B cell (primary cell): ENCODE measurements at regions of chr1 and their contacts with region 1.

Region 1: GRCh38 chr1:161225534-161226319 is at the start of gene TOMM40L:
- DNase-seq: peak; percentile 96
- ATAC-seq: peak; percentile 90
- H3K4me3 ChIP-seq: peak within 1 kb of the TSS; percentile 32 to 93 (median 79)
- H3K4me3 Mint-ChIP-seq: peak within 1 kb of the TSS; percentile 99
- H3K27ac ChIP-seq: peak within 1 kb of the TSS in 1 of 2 donors; percentile 35
- H3K27ac Mint-ChIP-seq: peak within 1 kb of the TSS; percentile 90
- H3K4me1 ChIP-seq: peaks cover 22 to 29% of the 10 kb centered on the region in 2 donors
- H3K4me1 Mint-ChIP-seq: peaks cover 31% of the 10 kb centered on the region
- H3K27me3 ChIP-seq: peaks cover 0 to 32% (median 24%) of the 10 kb centered on the region in 4 experiments
- H3K27me3 Mint-ChIP-seq: peaks cover 27% of the 10 kb centered on the region
- CTCF ChIP-seq: peak; percentile 56
- total RNA-seq, gene TOMM40L: 9.2 and 9.4 TPM in 2 replicates

Region 2: DNA sequence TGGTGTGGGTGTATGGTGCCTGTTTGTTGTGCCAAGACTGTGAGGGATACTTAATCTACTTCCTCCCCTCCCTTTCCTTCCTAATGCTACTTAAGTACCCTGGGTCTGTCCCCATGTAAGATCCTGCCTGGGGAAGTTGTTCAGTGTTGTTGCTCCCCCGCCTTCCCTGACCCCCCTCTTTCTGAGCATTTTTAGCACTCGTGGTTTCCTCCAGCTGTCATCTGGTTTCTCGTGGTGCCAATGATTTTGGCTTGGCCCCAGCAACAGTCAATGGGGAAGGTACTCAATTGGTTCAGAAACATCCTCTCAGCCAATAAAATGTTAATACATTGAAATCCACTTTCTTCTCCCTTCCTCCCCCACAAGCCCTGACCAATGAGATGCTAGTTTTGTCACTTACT is 40.4 kb before region 1 on chr1:
- CTCF ChIA-PET with region 1: interaction called, 16 read pairs
- POLR2A ChIA-PET with region 1: interaction called, 5 read pairs
- intact Hi-C with region 1: loop called (anchors 5 kb)
- DNase-seq: peak; percentile 91
- ATAC-seq: peak; percentile 76
- H3K4me3 ChIP-seq: peak overlapping the region in 4 of 5 experiments; percentile 31 to 63 (median 36)
- H3K4me3 Mint-ChIP-seq: peak overlapping the region; percentile 71
- H3K27ac ChIP-seq: peak overlapping the region; percentile 86 to 94
- H3K27ac Mint-ChIP-seq: peak overlapping the region; percentile 93
- H3K4me1 ChIP-seq: peaks cover 73 to 93% of the 10 kb centered on the region in 2 donors
- H3K4me1 Mint-ChIP-seq: peaks cover 78% of the 10 kb centered on the region
- H3K27me3 ChIP-seq: no peaks in the 10 kb centered on the region
- H3K27me3 Mint-ChIP-seq: no peaks in the 10 kb centered on the region
- CTCF ChIP-seq: no peak

Region 3: GRCh38 chr1:161201828-161202725 is 23.6 kb before region 1 on chr1 and contains the start of gene NDUFS2:
- CTCF ChIA-PET with region 1: interaction called, 23 read pairs
- POLR2A ChIA-PET with region 1: interaction called, 21 read pairs
- intact Hi-C with region 1: loop called (anchors 1 kb)
- DNase-seq: peak; percentile 97
- ATAC-seq: peak; percentile 98
- H3K4me3 ChIP-seq: peak within 1 kb of the TSS; percentile 77 to 99 (median 88)
- H3K4me3 Mint-ChIP-seq: peak within 1 kb of the TSS; percentile 96
- H3K27ac ChIP-seq: peak within 1 kb of the TSS; percentile 81 to 88
- H3K27ac Mint-ChIP-seq: peak within 1 kb of the TSS; percentile 97
- H3K4me1 ChIP-seq: peaks cover 16 to 26% of the 10 kb centered on the region in 2 donors
- H3K4me1 Mint-ChIP-seq: peaks cover 36% of the 10 kb centered on the region
- H3K27me3 ChIP-seq: no peaks in the 10 kb centered on the region
- H3K27me3 Mint-ChIP-seq: no peaks in the 10 kb centered on the region
- CTCF ChIP-seq: no peak
- total RNA-seq, gene NDUFS2: 80.2 and 82.3 TPM in 2 replicates

Region 4: GRCh38 chr1:161292631-161293030 is 66.9 kb after region 1 on chr1:
- CTCF ChIA-PET with region 1: interaction called, 34 read pairs
- POLR2A ChIA-PET with region 1: no interaction called
- intact Hi-C with region 1: loop called (anchors 5 kb)
- DNase-seq: no peak
- ATAC-seq: no peak
- H3K4me3 ChIP-seq: no peak overlapping the region
- H3K4me3 Mint-ChIP-seq: no peak overlapping the region
- H3K27ac ChIP-seq: no peak overlapping the region
- H3K27ac Mint-ChIP-seq: no peak overlapping the region
- H3K4me1 ChIP-seq: no peaks in the 10 kb centered on the region
- H3K4me1 Mint-ChIP-seq: peaks cover 6% of the 10 kb centered on the region
- H3K27me3 ChIP-seq: no peaks in the 10 kb centered on the region
- H3K27me3 Mint-ChIP-seq: no peaks in the 10 kb centered on the region
- CTCF ChIP-seq: no peak

Region 5: GRCh38 chr1:161314201-161314981 is 88.7 kb after region 1 on chr1 and contains the start of gene SDHC:
- CTCF ChIA-PET with region 1: interaction called, 9 read pairs
- POLR2A ChIA-PET with region 1: interaction called, 6 read pairs
- intact Hi-C with region 1: loop called (anchors 2 kb)
- DNase-seq: peak; percentile 93
- ATAC-seq: peak; percentile 95
- H3K4me3 ChIP-seq: peak within 1 kb of the TSS; percentile 87 to 97 (median 94)
- H3K4me3 Mint-ChIP-seq: peak within 1 kb of the TSS; percentile 90
- H3K27ac ChIP-seq: peak within 1 kb of the TSS; percentile 88 to 97
- H3K27ac Mint-ChIP-seq: peak within 1 kb of the TSS; percentile 93
- H3K4me1 ChIP-seq: peaks cover 8 to 15% of the 10 kb centered on the region in 2 donors
- H3K4me1 Mint-ChIP-seq: peaks cover 25% of the 10 kb centered on the region
- H3K27me3 ChIP-seq: no peaks in the 10 kb centered on the region
- H3K27me3 Mint-ChIP-seq: no peaks in the 10 kb centered on the region
- CTCF ChIP-seq: peak; percentile 21
- total RNA-seq, gene SDHC: 99.0 and 109 TPM in 2 replicates

Region 6: DNA sequence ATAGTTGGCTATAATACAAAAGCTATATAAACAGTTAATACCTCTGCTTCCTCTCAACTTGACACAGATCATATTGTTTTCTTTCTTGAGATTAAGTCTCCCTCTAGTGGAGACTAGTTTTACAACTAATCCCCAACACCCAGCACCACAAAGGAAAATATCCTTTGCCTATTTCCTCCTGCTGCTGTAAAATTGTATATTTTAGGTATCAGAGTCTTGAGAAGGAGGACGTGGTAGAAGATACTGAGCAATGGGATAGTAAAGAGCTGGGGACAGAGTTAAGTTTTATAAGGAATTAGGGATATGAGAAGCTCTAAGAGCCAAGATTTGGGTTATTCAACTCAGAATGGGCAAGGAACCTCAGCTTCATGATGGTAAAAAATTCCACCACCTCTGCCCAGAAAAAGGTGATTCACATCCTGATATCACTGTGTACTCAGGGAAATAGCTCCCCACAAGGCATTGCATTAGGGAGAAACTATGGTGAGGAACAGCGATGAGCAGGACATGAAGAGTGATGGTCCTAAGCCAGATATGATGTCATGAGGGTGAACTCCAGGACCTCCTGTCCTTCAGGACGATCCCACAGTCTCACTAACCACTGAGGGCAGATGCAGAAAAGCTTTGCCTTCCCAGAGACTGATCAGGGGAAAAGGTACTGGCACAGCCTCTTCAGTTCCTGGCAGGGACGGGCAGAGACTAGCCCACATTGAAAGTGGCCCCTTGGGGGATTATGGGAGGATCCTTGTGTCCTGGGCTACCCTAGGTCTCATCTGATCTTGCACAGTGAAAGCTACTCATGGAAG is 156.7 kb after region 1 on chr1:
- CTCF ChIA-PET with region 1: interaction called, 104 read pairs
- POLR2A ChIA-PET with region 1: interaction called, 7 read pairs
- intact Hi-C with region 1: loop called (anchors 1 kb)
- DNase-seq: peak; percentile 68
- ATAC-seq: peak; percentile 86
- H3K4me3 ChIP-seq: no peak overlapping the region
- H3K4me3 Mint-ChIP-seq: no peak overlapping the region
- H3K27ac ChIP-seq: no peak overlapping the region
- H3K27ac Mint-ChIP-seq: no peak overlapping the region
- H3K4me1 ChIP-seq: peaks cover 3% of the 10 kb centered on the region in 2 donors
- H3K4me1 Mint-ChIP-seq: peaks cover 6% of the 10 kb centered on the region
- H3K27me3 ChIP-seq: no peaks in the 10 kb centered on the region
- H3K27me3 Mint-ChIP-seq: no peaks in the 10 kb centered on the region
- CTCF ChIP-seq: peak; percentile 85